Common myeloid progenitor, CD34-positive (primary cell): ENCODE measurements at regions of chr18 and their contacts with region 1.

Region 1: DNA sequence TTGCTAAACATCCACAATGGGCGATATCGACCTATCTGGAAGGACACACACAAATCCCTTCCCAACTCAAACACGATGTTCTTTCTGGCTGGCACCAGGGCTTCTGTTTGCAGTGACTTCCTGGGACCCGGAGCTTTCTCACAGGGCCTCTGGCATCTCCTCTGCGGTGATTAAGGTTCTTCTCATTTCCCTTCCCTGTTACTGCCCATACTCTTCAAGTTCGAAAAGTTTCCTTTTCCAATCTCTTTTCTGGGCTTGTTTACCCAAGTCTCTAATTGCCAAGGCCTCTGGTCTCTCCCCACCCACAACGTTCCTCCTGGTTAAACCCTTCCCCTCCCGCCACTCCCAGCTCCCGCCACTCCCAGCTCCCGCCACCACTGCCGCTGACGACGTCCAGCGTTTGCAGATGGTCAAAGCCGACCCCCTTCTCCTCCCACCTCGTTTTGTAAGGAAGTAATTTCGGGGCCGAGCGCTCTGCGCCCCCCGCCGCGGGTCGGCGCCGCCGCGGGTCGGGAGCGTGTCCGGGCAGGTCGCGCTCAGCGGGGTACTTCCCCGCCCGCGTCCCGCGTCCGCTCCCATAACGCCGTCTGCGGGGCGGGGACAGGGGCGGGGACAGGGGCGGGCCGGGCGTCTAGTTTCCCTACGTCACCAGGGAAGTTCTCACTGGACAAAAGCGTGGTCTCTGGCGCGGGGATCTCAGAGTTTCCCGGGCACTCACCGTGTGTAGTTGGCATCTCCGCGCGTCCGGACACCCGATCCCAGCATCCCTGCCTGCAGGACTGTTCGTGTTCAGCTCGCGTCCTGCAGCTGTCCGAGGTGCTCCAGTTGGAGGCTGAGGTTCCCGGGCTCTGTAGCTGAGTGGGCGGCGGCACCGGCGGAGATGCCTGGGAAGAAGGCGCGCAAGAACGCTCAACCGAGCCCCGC is at the start of gene PMAIP1:
- DNase-seq: peak; percentile 83 to 92 (median 91)
- H3K4me3 ChIP-seq: peak within 1 kb of the TSS; percentile 59 to 96 (median 89)
- H3K27ac ChIP-seq: peak within 1 kb of the TSS; percentile 83 to 96
- H3K4me1 ChIP-seq: peaks cover 11 to 36% (median 22%) of the 10 kb centered on the region in 4 experiments
- H3K27me3 ChIP-seq: no peaks in the 10 kb centered on the region

Region 2: GRCh38 chr18:59881728-59882656 is 17.6 kb before region 1 on chr18:
- CTCF ChIA-PET with region 1: interaction called, 3 read pairs
- POLR2A ChIA-PET with region 1: interaction called, 12 read pairs
- DNase-seq: peak; percentile 47 to 77 (median 73)
- H3K4me3 ChIP-seq: peak overlapping the region in 4 of 7 experiments; percentile 3 to 54 (median 6)
- H3K27ac ChIP-seq: peak overlapping the region in 1 of 2 experiments; percentile 52
- H3K4me1 ChIP-seq: peaks cover 37 to 52% (median 41%) of the 10 kb centered on the region in 4 experiments
- H3K27me3 ChIP-seq: no peaks in the 10 kb centered on the region

Region 3: DNA sequence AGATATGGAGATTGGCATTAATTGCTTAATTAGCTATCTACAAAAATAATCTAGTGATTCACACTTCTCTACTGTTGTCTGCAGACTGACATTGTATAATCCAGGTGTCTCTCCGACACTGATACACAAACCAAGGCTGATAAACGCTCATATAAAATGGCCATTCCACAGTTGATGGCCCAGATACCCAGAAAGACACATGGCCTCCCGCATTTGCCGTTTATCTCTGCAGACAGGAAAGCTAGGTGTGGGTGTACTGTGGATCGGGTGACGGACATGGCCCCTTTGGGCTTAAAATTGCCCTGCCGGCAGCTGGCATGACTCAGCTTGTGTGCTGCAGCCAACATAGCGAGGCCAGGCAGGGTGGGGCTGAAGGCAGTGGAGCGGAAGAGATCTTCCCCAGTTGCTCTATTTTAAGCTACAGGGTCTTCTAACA is 18.8 kb after region 1 on chr18:
- CTCF ChIA-PET with region 1: interaction called, 11 read pairs
- POLR2A ChIA-PET with region 1: interaction called, 7 read pairs
- DNase-seq: peak; percentile 80 to 97 (median 94)
- H3K4me3 ChIP-seq: peak overlapping the region in 5 of 7 experiments; percentile 28 to 56 (median 35)
- H3K27ac ChIP-seq: peak overlapping the region in 1 of 2 experiments; percentile 64
- H3K4me1 ChIP-seq: peaks cover 21 to 61% (median 43%) of the 10 kb centered on the region in 4 experiments
- H3K27me3 ChIP-seq: no peaks in the 10 kb centered on the region

Region 4: GRCh38 chr18:59988098-59988706 is 88.6 kb after region 1 on chr18:
- CTCF ChIA-PET with region 1: interaction called, 10 read pairs
- POLR2A ChIA-PET with region 1: interaction called, 3 read pairs
- DNase-seq: peak; percentile 71 to 84 (median 77)
- H3K4me3 ChIP-seq: no peak overlapping the region
- H3K27ac ChIP-seq: no peak overlapping the region
- H3K4me1 ChIP-seq: peaks cover 0 to 10% (median 0%) of the 10 kb centered on the region in 4 experiments
- H3K27me3 ChIP-seq: peaks cover 3 to 32% (median 18%) of the 10 kb centered on the region in 5 experiments